GM10248 (cell line): ENCODE measurements at regions of chr11 and their contacts with region 1.

Region 1: GRCh38 chr11:116787786-116788486 is at the start of gene ZPR1:
- DNase-seq: peak; percentile 94
- CTCF ChIP-seq: no peak

Region 2: DNA sequence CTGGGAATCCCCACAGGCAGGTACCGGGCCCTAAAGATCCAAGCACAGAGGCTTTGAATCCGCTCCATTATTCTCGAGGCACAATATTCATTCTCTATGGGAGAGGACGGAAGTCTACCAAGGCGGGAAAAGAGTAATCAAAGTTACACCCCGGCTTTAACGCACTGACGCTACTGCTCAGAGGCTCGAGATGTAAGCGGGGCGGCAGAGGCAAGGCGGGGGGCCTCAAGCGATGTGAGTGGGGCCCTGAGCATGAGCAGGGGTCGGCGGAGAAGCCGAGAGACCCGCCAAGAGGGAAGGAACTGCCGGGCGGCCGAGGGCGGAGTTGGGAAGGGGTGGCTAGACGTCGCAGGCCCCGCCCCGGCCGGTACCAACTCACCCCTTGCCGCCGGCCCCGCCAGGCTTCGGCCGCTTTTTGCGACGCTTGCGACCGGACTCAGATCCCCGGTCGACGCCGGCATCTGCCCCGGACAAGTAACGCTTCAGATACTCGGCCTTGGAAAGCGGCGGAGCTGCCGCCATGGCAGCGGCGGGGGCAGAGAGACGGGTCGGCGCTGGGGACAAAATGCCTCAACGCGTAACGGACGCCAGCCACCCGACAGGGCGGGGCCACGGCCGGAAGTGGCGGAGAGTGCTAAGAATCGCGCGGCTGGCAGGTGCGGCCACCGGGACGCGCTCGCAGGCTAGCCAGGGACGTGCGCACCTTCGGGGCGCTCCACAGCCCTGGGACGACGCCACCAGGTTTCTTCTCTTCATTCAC is 15.3 kb before region 1 on chr11 and contains the start of gene BUD13:
- CTCF ChIA-PET with region 1: interaction called, 53 read pairs
- POLR2A ChIA-PET with region 1: interaction called, 3 read pairs
- DNase-seq: peak; percentile 96
- CTCF ChIP-seq: no peak

Region 3: GRCh38 chr11:116813781-116814471 is 26.0 kb after region 1 on chr11:
- CTCF ChIA-PET with region 1: interaction called, 14 read pairs
- POLR2A ChIA-PET with region 1: no interaction called
- DNase-seq: no peak
- CTCF ChIP-seq: no peak

Region 4: DNA sequence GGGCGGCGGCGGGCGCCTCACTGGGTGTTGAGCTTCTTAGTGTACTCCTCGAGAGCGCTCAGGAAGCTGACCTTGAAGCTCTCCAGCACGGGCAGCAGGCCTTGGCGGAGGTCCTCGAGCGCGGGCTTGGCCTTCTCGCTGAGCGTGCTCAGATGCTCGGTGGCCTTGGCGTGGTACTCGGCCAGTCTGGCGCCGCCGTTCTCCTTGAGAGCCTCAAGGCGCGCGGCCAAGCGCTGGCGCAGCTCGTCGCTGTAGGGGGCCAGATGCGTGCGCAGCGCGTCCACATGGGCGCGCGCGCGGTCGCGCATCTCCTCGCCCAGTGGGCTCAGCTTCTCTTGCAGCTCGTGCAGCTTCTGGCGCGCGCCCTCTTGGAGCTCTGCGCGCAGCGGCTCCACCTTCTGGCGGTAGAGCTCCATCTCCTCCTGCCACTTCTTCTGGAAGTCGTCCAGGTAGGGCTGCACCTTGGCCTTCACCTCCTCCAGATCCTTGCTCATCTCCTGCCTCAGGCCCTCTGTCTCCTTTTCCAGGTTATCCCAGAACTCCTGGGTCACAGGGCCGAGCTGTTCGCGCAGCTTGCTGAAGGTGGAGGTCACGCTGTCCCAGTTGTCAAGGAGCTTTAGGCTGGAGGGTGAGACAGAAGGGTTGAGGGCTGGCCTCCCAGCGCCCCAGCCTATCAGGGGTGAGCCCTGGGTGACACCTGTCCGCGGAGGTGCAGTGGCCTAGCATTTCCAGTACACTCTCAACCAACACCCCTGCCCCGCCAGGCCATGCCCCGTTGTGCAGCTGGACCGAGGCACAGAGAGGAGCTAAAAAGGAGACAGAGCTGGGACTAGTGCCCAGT is 48.1 kb after region 1 on chr11:
- CTCF ChIA-PET with region 1: interaction called, 100 read pairs
- POLR2A ChIA-PET with region 1: interaction called, 4 read pairs
- DNase-seq: peak; percentile 90
- CTCF ChIP-seq: peak; percentile 77

Region 5: GRCh38 chr11:117098269-117099232 is 310.6 kb after region 1 on chr11 and contains the start of gene SIK3:
- CTCF ChIA-PET with region 1: interaction called, 86 read pairs
- POLR2A ChIA-PET with region 1: no interaction called
- DNase-seq: peak; percentile 99
- CTCF ChIP-seq: peak; percentile 68

Region 6: DNA sequence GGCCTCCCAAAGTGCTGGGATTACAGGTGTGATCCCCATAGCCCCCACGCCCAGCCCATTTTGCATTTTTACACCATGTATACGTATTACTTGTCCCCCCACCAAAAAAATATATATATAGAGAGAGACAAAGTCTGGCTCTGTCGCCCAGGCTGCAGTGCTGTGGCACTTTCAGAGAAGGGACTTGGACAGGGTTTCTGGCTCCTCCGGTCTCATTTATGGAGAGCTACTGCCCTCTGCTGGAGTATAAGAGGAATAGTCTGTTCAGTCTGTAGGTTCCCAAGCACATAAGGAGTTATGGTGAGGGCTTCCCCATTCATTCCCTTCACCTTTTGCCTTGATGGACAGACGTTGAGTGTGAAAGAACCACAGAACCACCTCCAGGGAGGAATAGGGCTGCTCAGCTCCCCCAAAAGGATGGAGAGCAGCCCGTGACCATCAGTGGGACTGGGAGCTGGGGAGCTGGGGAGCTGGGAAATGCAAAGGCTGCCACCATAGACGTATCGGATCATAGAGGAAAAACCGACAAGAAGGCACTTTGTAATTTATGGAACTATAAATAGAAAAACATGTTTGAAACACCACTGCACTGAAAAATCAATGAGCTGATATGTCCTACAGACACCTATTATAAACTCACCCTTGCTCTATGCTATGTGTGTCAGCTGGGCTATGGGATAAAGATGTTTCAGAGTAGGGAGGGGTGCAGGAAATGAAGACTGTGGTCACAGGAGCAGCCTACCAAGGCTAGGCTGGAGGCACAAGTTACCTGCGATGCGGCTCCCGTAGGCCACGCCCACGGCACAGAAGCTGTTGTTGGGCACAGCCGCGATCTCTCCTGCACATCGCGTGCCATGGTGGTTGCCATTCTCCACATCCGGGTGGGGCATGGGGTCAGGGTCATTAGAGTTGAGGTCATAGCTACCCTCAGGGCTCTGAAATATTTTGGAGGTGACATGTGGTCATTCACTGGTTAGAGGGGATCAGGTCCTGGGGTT is 438.8 kb after region 1 on chr11:
- CTCF ChIA-PET with region 1: interaction called, 16 read pairs
- POLR2A ChIA-PET with region 1: no interaction called
- DNase-seq: peak; percentile 82
- CTCF ChIP-seq: peak; percentile 81